ENCODE measurements at regions of chr14 and their contacts with region 1.

Region 1: DNA sequence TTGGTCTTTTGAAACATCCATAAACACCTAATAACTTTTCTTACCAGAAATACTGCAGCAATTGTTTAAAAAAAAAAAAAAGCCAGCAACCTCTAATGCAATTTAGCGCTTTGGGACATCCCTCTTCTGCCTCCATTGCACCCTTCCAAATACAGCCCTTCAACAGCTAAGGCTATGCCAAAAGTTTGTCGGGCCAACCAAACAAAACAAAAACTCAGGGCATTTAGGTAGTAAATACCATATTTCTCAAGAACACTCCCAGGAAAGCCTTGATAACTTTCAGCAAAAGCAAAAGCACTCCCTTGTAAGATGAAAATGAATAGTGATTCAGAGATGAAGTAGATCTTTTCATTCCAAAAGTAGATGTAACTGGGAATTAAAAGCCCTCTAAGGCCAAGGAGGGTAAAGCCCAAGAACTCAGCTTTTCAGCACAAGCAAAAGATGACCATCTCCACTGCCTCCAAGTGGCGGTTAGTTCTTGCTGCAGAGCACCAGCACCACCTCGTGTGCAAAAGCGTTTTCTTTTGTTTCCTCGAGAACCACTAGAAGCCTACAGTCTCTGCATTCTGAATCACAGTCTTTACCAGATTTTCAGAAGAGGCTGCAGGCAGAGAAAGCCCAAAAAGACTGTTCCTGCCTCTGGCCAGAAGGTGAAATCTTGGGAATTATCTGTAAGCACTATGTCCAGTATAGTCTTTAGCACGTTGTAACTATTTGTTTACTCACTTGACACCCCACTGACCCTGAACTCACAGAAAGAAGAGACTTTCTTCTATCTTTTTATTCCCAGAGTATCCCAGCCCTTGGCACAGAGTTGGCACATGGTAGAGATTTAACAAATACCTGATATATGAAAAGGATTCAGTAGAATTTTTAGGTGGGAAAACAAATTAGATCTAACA is 53.1 kb downstream of the SIX6 start:
- DNase-seq: peak; percentile 53 to 60
- H3K4me3 ChIP-seq: no peak overlapping the region
- H3K27ac ChIP-seq: no peak overlapping the region
- H3K4me1 ChIP-seq: no peaks in the 10 kb centered on the region
- H3K27me3 ChIP-seq: no peaks in the 10 kb centered on the region
- CTCF ChIP-seq: peak; percentile 74 to 98 (median 96)
- EP300 ChIP-seq: no peak
- POLR2A ChIP-seq: no peak
- RAD21 ChIP-seq: peak; percentile 98 to 99

Region 2: DNA sequence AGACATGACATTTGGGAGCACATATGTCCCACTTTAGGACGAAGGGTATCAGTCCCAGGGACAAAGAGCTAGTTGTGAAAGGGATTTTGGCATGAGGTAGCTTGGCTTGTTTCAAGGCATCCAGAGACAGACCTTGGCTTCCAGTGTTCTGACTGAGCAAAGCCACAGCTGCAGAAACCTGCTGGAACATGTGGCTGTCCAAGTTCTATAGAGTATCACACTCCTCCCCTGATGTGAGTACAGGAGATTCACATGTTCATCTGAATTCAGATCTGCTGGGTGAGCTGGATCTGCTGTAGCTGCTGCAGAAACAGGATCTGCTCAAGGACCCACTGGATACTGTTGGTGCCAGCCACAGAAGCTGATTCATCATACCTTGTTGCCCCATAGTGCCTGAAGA is 66.2 kb before region 1 on chr14:
- CTCF ChIA-PET with region 1: interaction called, 11 read pairs
- POLR2A ChIA-PET with region 1: no interaction called
- DNase-seq: no peak
- H3K4me3 ChIP-seq: no peak overlapping the region
- H3K27ac ChIP-seq: no peak overlapping the region
- H3K4me1 ChIP-seq: no peaks in the 10 kb centered on the region
- H3K27me3 ChIP-seq: peaks cover 0 to 1% (median 0%) of the 10 kb centered on the region in 4 experiments; a peak in 1 of 7 replicates
- CTCF ChIP-seq: no peak
- EP300 ChIP-seq: no peak
- POLR2A ChIP-seq: no peak
- RAD21 ChIP-seq: no peak

Region 3: DNA sequence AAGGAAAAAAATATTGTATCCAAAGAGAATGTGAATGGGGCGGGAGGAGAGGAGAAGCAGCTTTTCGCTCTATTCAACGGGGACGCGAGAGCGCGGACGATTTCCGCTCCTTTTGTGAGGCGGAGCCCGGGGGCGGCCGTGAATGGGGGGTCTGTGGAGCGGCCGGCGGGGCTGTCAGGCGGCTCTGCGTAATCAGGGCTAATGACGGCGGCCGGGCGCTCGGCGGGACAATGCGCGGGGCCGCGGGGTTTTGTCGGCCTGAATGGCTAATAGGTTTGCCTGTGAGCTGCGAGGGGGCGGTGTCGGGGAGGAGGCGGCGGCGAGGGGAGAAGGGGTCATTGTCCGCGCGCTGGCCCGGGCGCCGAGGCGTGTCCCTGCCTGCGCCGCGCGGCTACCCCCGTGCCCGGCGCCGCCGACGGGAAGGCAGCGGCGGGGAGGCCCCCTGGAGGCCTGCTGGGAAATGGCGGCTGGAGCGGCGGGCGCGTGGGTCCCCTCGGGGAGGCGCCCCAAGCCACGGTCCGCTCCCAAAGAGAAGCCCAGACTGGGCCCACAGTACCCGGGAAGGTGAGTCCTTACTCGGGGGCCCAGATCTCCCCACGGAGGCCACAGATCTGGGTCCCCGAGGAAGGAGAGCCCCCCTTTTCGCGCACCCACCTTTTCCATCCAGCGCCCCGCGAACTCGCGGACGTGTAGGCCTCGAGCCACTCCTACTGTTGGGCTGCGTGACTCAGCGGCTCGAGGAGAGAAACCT is 47.2 kb before region 1 on chr14:
- CTCF ChIA-PET with region 1: interaction called, 11 read pairs
- POLR2A ChIA-PET with region 1: no interaction called
- DNase-seq: peak in 1 of 2 experiments; percentile 83
- H3K4me3 ChIP-seq: peak overlapping the region; percentile 35 to 71 (median 45)
- H3K27ac ChIP-seq: no peak overlapping the region
- H3K4me1 ChIP-seq: peaks cover 8 to 23% (median 14%) of the 10 kb centered on the region in 4 experiments
- H3K27me3 ChIP-seq: peaks cover 45 to 76% (median 67%) of the 10 kb centered on the region in 4 experiments
- CTCF ChIP-seq: peak; percentile 32 to 58 (median 54)
- EP300 ChIP-seq: no peak
- POLR2A ChIP-seq: no peak; a peak in 1 of 3 replicates
- RAD21 ChIP-seq: no peak; a peak in 1 of 4 replicates